Activated T-helper 1 cell treated with anti-CD3 and anti-CD28 coated beads, Interleukin-12 subunit alpha, Interleukin-12 subunit beta, Interleukin-2, Interleukin-4 antibody, amounts not matched to agents 30 ng/mL and 10 ng/mL and 1 ng/mL, durations not matched to agents 14 hours and 24 hours and 36 hours (primary cell): ENCODE measurements at regions of chr2 and their contacts with region 1.

Region 1: GRCh38 chr2:98012561-98012991 is 16.8 kb upstream of the TMEM131 start:
- DNase-seq: no peak
- H3K4me3 Mint-ChIP-seq: no peak overlapping the region
- H3K27ac Mint-ChIP-seq: peak overlapping the region; percentile 78
- H3K4me1 Mint-ChIP-seq: peaks cover 34% of the 10 kb centered on the region
- H3K27me3 Mint-ChIP-seq: no peaks in the 10 kb centered on the region

Region 2: GRCh38 chr2:97849881-97850528 is 162.6 kb before region 1 on chr2:
- intact Hi-C with region 1: loop called (anchors 1 kb)
- DNase-seq: no peak
- H3K4me3 Mint-ChIP-seq: peak overlapping the region; percentile 0
- H3K27ac Mint-ChIP-seq: peak overlapping the region; percentile 32
- H3K4me1 Mint-ChIP-seq: peaks cover 44% of the 10 kb centered on the region
- H3K27me3 Mint-ChIP-seq: no peaks in the 10 kb centered on the region

Region 3: DNA sequence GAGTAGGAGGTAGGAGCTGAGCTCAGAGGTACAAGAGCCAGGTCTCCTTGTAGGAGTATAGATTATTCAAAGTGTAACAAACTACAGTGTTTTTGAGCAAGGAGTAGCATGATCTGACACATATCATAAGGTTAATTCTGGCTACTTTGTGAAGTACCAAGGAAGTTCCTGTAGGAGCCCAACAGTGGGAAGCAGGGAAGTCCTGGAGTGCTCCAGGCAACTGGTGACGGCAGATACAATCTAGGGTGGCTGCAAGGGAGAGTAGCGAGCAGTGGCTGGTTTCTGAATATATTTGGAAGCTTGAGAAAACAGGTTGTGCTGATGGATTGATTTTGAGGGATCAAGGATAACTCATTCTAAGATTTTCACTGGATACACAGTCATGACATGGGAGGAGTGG is 122.5 kb before region 1 on chr2:
- intact Hi-C with region 1: no loop called
- DNase-seq: no peak
- H3K4me3 Mint-ChIP-seq: no peak overlapping the region
- H3K27ac Mint-ChIP-seq: no peak overlapping the region
- H3K4me1 Mint-ChIP-seq: no peaks in the 10 kb centered on the region
- H3K27me3 Mint-ChIP-seq: no peaks in the 10 kb centered on the region

Region 4: DNA sequence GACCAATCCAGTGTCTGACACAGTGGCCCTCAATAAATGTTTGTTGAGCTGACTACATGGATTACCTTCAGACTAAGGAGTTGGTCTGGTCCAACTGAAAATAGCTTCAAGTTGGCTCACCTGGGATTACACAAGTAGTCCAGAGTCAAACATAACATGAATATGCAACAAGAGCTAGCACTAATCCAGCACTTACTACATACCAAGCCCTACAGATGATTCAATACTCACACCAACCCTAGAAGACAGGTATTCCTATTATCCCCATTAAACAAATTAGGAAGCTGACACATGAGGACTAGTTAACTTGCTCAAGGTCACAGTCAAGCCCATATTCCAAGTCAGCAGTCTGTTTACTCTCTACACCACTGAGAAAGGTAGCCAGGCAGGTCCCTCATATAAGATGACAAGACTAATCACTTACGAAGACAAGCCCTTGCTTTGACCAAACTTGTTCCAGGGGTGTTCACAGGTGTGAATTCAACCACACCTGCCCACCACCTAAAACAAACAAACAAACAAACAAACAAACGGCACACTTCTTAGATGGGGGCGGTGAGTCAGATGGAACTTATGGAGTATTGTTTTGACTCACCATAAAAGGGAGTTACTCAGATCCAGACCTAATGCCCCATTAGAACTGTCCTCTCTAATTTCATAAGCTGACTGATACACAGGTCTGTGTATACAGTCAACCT is 45.9 kb before region 1 on chr2:
- intact Hi-C with region 1: loop called (anchors 1 kb)
- DNase-seq: no peak
- H3K4me3 Mint-ChIP-seq: no peak overlapping the region
- H3K27ac Mint-ChIP-seq: peak overlapping the region; percentile 46
- H3K4me1 Mint-ChIP-seq: peaks cover 52% of the 10 kb centered on the region
- H3K27me3 Mint-ChIP-seq: no peaks in the 10 kb centered on the region

Region 5: GRCh38 chr2:98036349-98037000 is 23.9 kb after region 1 on chr2:
- intact Hi-C with region 1: no loop called
- DNase-seq: no peak
- H3K4me3 Mint-ChIP-seq: no peak overlapping the region
- H3K27ac Mint-ChIP-seq: no peak overlapping the region
- H3K4me1 Mint-ChIP-seq: no peaks in the 10 kb centered on the region
- H3K27me3 Mint-ChIP-seq: no peaks in the 10 kb centered on the region

Region 6: GRCh38 chr2:98086491-98087446 is 74.2 kb after region 1 on chr2 and contains the start of gene VWA3B:
- intact Hi-C with region 1: loop called (anchors 1 kb)
- DNase-seq: peak; percentile 57
- H3K4me3 Mint-ChIP-seq: peak within 1 kb of the TSS; percentile 77
- H3K27ac Mint-ChIP-seq: no peak within 1 kb of the TSS
- H3K4me1 Mint-ChIP-seq: peaks cover 25% of the 10 kb centered on the region
- H3K27me3 Mint-ChIP-seq: peaks cover 36% of the 10 kb centered on the region
- total RNA-seq, gene VWA3B: not detected in 2 replicates

Region 7: DNA sequence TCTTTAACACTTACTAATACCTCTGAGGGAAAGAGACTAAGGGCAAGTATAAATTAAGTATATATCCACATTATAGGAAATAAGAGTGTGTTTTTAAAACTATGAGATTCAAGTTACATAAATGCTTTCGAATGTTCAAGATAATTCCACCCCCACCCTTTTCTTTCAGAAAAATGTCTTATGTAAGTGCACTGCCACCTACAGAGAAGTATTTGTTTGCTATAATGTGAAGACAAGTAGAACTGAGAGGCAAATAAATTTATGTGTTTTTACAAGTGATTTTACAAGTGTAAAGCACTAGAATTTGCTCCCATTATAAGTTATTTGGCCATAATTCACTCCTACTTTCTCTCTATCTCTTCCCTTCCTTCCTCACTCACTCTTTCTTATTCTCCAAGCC is 1023.3 kb after region 1 on chr2:
- intact Hi-C with region 1: no loop called
- DNase-seq: no peak
- H3K4me3 Mint-ChIP-seq: no peak overlapping the region
- H3K27ac Mint-ChIP-seq: no peak overlapping the region
- H3K4me1 Mint-ChIP-seq: peaks cover 26% of the 10 kb centered on the region
- H3K27me3 Mint-ChIP-seq: no peaks in the 10 kb centered on the region